Right ventricle myocardium inferior (tissue), 1 donor: ENCODE measurements at regions of chr12 and their contacts with region 1.

Region 1: DNA sequence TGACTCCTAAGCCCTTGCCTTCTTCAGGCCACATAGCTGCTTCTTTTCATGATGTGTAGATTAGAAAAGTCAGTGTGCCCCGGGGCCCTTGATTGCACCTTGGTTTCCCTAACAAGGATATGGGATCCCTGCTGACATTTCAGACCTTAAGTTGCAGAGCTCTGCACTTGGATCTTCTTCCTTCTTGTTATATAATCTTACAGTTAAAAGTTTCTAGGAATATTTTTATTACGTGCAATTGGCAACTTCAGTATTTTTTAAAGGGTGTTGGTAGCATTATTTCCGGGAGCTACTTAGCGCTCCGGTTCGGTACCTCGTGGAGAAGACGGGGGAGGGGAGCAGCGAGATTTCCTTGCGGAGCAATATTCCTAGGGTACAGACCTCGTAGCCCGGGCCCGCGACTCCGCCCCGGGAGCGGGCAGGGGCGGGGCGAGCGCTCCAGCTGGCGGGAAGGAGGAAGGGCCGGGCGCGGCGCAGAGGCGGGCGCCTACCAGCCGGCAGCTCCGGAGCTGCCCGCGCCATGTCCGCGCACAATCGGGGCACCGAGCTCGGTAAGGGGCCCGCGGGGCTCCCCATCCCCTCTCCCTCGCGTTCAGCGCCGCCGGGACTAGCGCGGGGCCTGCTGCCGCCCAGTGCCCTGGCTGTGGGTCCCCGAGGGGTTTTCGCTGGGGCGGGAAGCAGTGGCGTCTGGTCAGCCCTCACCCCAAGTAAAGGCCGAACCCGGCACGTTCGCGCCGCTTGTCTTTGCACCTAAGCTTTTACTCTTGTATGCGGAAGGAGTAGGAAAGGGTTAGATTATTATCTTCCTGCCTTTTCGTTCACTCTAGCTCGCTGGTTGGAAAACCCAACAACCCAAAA is at the start of gene DERA:
- DNase-seq: peak; percentile 91
- ATAC-seq: peak; percentile 100
- total RNA-seq, gene DERA: 21.5 TPM

Region 2: GRCh38 chr12:15979096-15980092 is 68.3 kb after region 1 on chr12:
- intact Hi-C with region 1: loop called (anchors 5 kb)
- DNase-seq: no peak
- ATAC-seq: peak; percentile 45

Region 3: DNA sequence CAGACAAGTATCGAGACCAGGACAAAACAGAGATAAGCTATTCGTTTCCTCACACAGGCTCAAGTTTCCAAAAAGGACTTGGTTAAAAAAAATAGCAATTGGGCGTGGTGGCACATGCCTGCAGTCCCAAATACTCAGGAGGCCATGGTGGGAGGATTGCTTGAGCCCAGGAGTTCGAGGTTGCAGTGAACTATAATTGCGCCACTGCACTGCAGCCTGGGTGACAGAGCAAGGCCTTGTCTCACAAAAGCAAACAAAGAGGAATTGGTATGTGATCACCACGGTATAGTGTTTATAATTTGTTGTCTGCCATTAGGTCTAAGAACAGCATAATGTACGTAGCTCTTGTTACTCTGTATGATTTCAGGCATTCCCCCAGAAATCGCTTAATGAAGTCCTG is 175.4 kb after region 1 on chr12:
- intact Hi-C with region 1: no loop called
- DNase-seq: no peak
- ATAC-seq: no peak

Region 4: GRCh38 chr12:16112130-16112529 is 201.0 kb after region 1 on chr12:
- intact Hi-C with region 1: no loop called
- DNase-seq: no peak
- ATAC-seq: no peak